ENCODE measurements at regions of chr16 and their contacts with region 1.

Region 1: DNA sequence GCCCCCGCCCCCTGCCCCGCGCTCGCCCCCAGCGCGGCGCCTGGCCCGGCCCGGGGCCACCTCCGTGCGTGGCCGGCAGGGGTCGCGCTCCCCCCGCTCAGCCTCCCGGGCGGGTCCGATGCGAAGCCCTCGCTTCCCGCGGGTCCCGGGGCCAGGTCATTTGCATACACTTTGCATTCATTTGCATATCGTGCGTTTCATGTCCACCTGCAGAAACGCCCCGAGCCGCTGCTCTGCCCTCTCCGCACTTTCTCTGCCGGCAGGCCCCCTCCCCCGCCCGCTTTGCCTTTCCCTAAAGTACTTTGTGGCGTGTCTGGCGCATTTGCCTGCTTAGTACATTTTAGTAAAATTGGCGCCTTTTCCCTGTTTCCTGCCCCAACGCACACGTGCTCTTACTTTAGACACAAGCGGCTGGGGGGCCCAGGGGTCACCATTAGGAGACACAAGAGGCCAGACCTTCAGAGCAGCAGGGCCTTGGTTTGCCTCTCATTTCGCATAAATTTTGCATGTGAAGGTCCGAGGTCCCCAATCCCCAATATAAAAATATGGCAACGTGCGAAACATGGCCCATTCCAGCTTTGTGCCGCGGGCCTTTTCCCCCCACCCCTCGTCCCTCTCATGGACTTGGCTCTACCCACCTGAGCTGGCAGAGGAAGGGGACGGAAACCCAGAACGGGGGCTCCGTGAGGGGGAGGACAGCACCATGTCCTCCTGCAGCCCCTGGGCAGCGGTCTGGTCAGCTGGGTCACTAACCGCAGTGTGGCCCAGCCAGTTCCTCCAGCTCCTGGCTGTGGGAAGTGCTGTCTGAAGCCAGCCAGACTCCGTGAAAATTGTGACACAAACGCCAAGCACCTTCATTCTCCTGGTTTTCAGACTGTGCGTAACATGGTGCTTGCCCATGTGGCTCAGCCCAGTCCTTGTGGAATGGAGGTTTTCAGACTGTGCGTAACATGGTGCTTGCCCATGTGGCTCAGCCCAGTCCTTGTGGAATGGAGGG is 34.8 kb downstream of the CBFA2T3 start:
- DNase-seq: peak; percentile 55 to 76
- ATAC-seq: peak; percentile 55 to 79 (median 72)
- H3K4me3 ChIP-seq: peak overlapping the region; percentile 57
- H3K27ac ChIP-seq: no peak overlapping the region
- H3K4me1 ChIP-seq: peaks cover 10% of the 10 kb centered on the region
- H3K27me3 ChIP-seq: peaks cover 0 to 34% (median 5%) of the 10 kb centered on the region in 3 donors
- CTCF ChIP-seq: peak; percentile 78

Region 2: DNA sequence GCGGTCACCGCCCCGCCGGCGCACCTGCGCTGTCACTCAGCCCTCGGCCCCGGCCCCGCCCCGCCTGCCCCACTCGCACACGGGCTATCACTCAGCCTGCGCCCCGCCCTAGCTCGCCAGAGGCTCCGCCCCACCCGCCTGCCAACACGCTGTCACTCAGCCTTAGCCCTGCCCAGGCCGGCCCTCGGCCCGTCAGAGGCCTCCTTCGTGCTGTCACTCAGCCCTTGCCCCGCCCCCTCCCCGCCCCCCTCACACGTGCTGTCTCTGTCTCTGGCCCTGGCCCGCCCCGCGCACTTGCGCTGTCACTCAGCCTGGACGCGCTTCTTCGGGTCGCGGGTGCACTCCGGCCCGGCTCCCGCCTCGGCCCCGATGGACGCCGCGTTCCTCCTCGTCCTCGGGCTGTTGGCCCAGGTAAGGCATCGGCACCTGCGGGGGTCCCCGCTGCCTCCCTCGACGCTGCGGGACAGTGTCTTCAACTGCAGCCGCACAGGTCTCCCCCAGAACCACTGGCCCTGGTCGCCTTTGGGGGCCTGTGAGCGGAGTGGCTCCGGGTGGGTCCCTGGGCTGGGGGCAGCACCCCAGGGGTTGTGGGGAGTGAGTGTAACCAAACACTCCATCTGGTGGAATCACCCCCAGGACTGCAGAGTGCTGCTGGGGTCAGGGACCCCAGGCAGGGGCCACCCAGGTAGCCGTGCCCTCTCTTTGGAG is 229.4 kb after region 1 on chr16 and contains the start of gene CDH15:
- intact Hi-C with region 1: loop called in 1 of 2 experiments (anchors 5 kb)
- DNase-seq: peak; percentile 94 to 99
- ATAC-seq: peak; percentile 86 to 91 (median 88)
- H3K4me3 ChIP-seq: peak within 1 kb of the TSS; percentile 87
- H3K27ac ChIP-seq: peak within 1 kb of the TSS; percentile 95
- H3K4me1 ChIP-seq: peaks cover 43% of the 10 kb centered on the region
- H3K27me3 ChIP-seq: peaks cover 0 to 16% (median 0%) of the 10 kb centered on the region in 3 donors
- CTCF ChIP-seq: no peak
- total RNA-seq, gene CDH15: 36.7 to 62.8 (median 51.1) TPM

Region 3: DNA sequence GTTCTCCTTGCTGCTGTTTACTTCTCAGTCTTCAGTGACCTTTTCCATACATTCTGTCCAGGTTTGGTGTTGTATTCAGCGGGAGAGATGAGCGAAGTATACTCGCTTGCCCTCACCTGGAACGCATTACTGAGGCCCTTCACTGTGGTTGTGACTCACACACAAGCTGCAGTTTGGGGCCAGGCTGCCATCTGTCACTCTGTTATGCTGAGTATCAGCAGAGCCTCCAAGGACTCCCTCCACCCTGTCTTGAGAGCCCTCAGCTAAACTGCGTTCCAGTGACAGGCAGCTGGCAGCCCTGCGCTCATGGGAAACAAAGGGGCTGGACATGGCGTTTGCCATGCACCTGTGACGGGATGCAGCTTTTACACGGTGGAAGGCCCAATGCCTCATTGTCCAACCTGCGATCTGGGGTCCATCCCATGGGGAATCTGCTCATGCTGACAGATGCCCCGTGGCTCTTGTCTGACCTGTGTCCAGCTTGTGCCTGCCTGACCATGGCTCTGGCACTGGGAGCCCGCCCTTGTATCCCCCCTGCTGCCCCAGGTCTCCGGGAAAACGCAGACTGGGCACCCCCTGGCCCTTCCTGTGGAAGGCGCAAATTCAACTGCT is 268.8 kb after region 1 on chr16:
- intact Hi-C with region 1: loop called (anchors 5 kb)
- DNase-seq: no peak
- ATAC-seq: no peak
- H3K4me3 ChIP-seq: no peak overlapping the region
- H3K27ac ChIP-seq: no peak overlapping the region
- H3K4me1 ChIP-seq: peaks cover 14% of the 10 kb centered on the region
- H3K27me3 ChIP-seq: peaks cover 0 to 20% (median 2%) of the 10 kb centered on the region in 3 donors
- CTCF ChIP-seq: no peak

Region 4: GRCh38 chr16:89490387-89491237 is 548.4 kb after region 1 on chr16 and contains the start of gene ANKRD11:
- intact Hi-C with region 1: no loop called
- DNase-seq: peak; percentile 99 to 100
- ATAC-seq: peak; percentile 91 to 96 (median 95)
- H3K4me3 ChIP-seq: peak within 1 kb of the TSS; percentile 77
- H3K27ac ChIP-seq: peak within 1 kb of the TSS; percentile 93
- H3K4me1 ChIP-seq: peaks cover 49% of the 10 kb centered on the region
- H3K27me3 ChIP-seq: no peaks in the 10 kb centered on the region
- CTCF ChIP-seq: no peak
- total RNA-seq, gene ANKRD11: 52.3 to 72.8 (median 63.8) TPM